Ovary (tissue), 10 donors: ENCODE measurements at regions of chr1 and their contacts with region 1.

Region 1: DNA sequence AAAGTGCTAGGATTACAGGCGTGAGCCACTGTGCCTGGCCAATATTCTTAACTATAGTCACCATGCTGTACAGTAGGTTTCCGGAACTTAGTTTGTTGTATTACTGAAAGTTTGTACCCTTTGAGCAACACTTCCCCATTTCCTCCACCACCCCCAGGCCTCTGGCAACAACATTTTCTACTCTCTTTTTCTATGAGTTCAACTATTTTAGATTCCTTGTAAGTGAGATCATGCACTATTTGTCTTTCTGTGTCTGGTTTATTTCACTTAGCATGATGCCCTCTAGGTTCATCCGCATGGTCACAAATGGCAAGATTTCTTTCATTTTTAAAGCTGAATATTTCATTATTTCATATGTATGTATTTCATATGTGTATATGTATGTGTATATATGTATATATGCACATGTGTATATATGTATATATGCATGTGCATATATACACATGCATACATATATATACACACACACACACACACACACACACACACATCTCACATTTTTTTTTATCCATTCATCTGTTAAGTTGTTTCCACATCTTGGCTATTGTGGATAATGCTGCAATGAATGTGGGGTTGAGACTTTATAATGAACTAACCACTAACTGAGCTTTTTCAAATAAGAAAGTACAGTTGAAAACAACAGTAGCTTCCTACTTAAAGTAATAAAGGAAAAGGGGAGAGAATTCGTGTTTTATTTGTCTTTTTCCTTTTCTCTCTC is 256.8 kb upstream of the C1orf105 start:
- DNase-seq: no peak
- H3K4me3 ChIP-seq: no peak overlapping the region
- H3K27ac ChIP-seq: no peak overlapping the region
- H3K4me1 ChIP-seq: no peaks in the 10 kb centered on the region
- H3K27me3 ChIP-seq: no peaks in the 10 kb centered on the region
- CTCF ChIP-seq: no peak
- EP300 ChIP-seq: no peak
- POLR2A ChIP-seq: no peak

Region 2: GRCh38 chr1:172095846-172096245 is 67.8 kb before region 1 on chr1:
- intact Hi-C with region 1: no loop called
- DNase-seq: no peak
- H3K4me3 ChIP-seq: no peak overlapping the region
- H3K27ac ChIP-seq: no peak overlapping the region
- H3K4me1 ChIP-seq: peaks cover 2% of the 10 kb centered on the region
- H3K27me3 ChIP-seq: no peaks in the 10 kb centered on the region
- CTCF ChIP-seq: no peak
- EP300 ChIP-seq: no peak
- POLR2A ChIP-seq: no peak

Region 3: DNA sequence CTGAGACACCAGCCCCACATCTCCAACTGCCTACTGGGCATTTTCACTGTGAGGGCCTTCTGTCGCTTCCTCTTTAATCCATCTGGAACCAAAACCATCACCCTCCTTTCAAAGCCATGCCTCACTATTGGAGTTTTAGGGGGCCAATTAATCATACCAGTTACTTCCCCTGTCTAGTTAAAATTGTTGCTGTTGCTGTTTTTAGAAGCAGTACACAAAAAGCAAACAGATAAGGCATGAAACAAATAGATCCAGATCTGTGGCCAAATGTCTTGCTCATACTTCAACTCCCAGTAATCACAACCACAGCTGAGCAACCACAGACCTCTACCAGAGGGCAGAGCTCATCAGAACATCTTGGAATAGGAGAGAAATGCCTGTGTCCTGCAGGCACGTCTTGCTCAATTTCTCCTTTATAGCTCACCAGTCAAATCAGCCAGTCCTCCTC is 123.0 kb after region 1 on chr1:
- intact Hi-C with region 1: no loop called
- DNase-seq: peak in 2 of 5 donors; percentile 20 to 42
- H3K4me3 ChIP-seq: no peak overlapping the region
- H3K27ac ChIP-seq: no peak overlapping the region
- H3K4me1 ChIP-seq: peaks cover 4% of the 10 kb centered on the region
- H3K27me3 ChIP-seq: no peaks in the 10 kb centered on the region
- CTCF ChIP-seq: no peak
- EP300 ChIP-seq: no peak
- POLR2A ChIP-seq: no peak

Region 4: GRCh38 chr1:172338295-172338735 is 174.7 kb after region 1 on chr1:
- intact Hi-C with region 1: loop called in 1 of 4 experiments (anchors 1 kb)
- DNase-seq: no peak
- H3K4me3 ChIP-seq: no peak overlapping the region
- H3K27ac ChIP-seq: no peak overlapping the region
- H3K4me1 ChIP-seq: no peaks in the 10 kb centered on the region
- H3K27me3 ChIP-seq: no peaks in the 10 kb centered on the region
- CTCF ChIP-seq: no peak
- EP300 ChIP-seq: no peak
- POLR2A ChIP-seq: no peak

Region 5: GRCh38 chr1:172895050-172895460 is 731.4 kb after region 1 on chr1:
- intact Hi-C with region 1: no loop called
- DNase-seq: no peak
- H3K4me3 ChIP-seq: no peak overlapping the region
- H3K27ac ChIP-seq: no peak overlapping the region
- H3K4me1 ChIP-seq: peaks cover 4% of the 10 kb centered on the region
- H3K27me3 ChIP-seq: no peaks in the 10 kb centered on the region
- CTCF ChIP-seq: no peak
- EP300 ChIP-seq: no peak
- POLR2A ChIP-seq: no peak